ENCODE measurements at regions of chr1 and their contacts with region 1.

Region 1: DNA sequence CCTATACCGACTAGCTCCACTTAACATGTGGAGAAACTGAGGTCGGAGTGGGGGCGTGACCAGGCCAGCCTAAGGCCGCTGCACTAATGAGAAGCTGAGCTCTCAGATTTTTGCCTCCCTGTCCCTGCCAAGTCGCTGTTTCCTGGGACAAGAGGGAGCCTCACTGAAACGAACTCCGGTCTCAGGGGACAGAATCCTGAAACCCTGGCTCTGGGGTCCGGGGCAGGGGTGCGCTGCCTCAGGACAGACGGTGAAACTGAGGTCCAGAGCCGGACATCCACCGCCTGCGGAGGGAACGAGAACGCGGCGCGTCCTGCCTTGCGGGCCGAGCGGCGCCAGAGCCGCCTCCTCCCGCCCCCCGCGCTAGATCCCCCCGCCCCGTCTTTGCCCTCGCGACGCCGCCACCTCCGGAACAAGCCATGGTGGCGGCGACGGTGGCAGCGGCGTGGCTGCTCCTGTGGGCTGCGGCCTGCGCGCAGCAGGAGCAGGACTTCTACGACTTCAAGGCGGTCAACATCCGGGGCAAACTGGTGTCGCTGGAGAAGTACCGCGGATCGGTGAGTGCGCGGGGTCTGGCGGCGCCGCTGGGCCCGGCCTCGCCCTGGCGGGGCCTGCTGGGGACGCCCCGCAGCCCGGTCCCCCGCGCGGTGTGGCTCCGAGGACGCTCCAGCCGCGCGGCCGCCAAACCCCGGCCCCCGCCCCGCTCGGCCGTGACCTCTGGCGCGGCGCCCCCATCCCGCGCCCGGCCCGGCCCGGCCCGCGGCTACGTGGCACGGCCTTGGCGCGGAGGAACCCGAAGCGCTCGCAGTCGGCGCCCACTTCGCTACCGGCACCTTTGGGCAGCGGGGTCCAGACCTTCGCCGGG is at the start of gene GPX7:
- DNase-seq: peak; percentile 42 to 86 (median 64)
- ATAC-seq: peak; percentile 84
- H3K4me3 ChIP-seq: peak within 1 kb of the TSS; percentile 74
- H3K4me3 Mint-ChIP-seq: peak within 1 kb of the TSS; percentile 92
- H3K27ac ChIP-seq: peak within 1 kb of the TSS; percentile 62 to 73
- H3K27ac Mint-ChIP-seq: peak within 1 kb of the TSS; percentile 96
- H3K4me1 ChIP-seq: peaks cover 51% of the 10 kb centered on the region
- H3K4me1 Mint-ChIP-seq: peaks cover 50% of the 10 kb centered on the region
- H3K27me3 ChIP-seq: no peaks in the 10 kb centered on the region
- H3K27me3 Mint-ChIP-seq: no peaks in the 10 kb centered on the region
- CTCF ChIP-seq: no peak
- total RNA-seq, gene GPX7: 11.7 to 12.5 TPM

Region 2: DNA sequence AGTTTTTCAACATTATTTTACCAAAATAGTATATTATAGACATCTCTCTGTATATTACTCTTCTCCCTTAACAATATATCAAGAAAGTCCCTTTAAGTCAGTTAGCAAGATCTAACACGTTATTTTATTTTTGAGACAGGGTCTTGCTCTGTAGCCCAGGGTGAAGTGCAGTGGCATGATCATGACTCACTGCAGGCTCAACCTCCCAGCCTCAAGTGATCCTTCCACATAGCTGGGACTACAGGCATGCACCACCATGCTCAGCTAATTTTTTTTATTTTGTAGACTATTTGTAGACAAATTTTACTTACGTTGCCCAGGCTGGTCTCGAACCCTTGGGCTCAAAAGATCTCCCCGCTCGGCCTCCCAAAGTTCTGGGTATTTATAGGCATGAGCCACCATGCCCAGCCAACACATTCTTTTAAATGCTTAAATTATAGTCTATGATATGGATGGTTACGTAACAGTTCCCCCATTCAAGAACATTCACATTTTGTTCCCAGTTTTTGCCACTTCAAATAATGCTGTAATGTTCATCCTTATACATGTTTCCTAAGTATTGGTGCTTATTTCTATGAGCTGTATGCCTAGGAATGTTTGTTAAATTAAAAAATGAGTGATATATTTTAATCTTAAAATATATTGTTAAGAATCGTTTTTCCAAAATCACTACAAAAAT is 119.8 kb before region 1 on chr1:
- CTCF ChIA-PET with region 1: no interaction called
- POLR2A ChIA-PET with region 1: no interaction called
- intact Hi-C with region 1: no loop called
- DNase-seq: no peak
- ATAC-seq: no peak
- H3K4me3 ChIP-seq: no peak overlapping the region
- H3K4me3 Mint-ChIP-seq: no peak overlapping the region
- H3K27ac ChIP-seq: no peak overlapping the region
- H3K27ac Mint-ChIP-seq: no peak overlapping the region
- H3K4me1 ChIP-seq: no peaks in the 10 kb centered on the region
- H3K4me1 Mint-ChIP-seq: no peaks in the 10 kb centered on the region
- H3K27me3 ChIP-seq: no peaks in the 10 kb centered on the region
- H3K27me3 Mint-ChIP-seq: no peaks in the 10 kb centered on the region
- CTCF ChIP-seq: no peak

Region 3: DNA sequence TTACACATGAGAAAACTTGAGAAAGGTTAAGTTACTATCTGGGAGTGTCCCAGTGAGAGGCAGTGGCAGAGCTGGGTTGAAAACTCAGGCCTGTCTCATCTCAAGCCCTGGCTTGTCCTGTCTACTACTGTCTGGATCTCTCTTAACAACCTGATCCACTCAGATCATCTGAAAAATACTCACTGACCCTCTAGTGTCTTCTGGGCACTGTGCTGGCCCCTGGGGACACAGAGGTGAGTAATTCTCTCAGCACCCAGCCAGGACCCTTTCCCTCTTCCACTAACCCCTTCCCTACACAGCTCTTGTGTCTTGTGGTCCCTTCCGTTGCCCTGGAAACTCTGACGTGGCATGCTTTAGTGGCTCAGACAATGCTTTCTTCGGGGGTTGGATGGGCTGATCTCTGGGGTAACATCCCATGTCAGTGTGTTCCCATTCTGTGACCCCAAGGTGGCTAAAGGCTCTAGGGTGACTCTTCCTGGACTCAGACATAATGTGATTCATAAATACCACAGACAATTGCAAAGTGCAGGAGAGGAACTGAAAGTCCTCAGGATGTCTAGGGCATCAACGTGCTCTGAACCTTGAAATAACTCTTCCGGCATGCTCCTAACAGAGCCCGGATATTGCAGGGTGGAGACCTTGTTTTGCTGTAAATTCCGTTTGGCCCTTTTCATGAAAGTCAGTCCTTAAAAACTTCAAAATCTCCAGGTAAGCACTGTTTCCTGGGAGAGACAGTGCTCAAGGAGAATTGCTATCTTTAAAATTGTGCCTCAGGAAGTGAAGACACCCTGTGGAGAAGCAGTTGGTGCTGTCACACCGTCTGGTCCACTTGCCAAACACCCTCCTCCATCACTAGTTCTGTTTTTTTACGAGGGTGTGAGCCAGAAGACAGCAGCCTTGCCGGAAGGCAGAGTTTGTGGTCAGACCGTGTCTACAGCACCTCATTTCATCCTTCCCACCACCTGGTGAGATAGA is 34.8 kb after region 1 on chr1:
- CTCF ChIA-PET with region 1: no interaction called
- POLR2A ChIA-PET with region 1: interaction called, 34 read pairs
- intact Hi-C with region 1: loop called (anchors 1 to 2 kb)
- DNase-seq: peak; percentile 58 to 91 (median 66)
- ATAC-seq: peak; percentile 66
- H3K4me3 ChIP-seq: peak overlapping the region; percentile 41
- H3K4me3 Mint-ChIP-seq: peak overlapping the region; percentile 86
- H3K27ac ChIP-seq: peak overlapping the region; percentile 93 to 94
- H3K27ac Mint-ChIP-seq: peak overlapping the region; percentile 98
- H3K4me1 ChIP-seq: peaks cover 92% of the 10 kb centered on the region
- H3K4me1 Mint-ChIP-seq: peaks cover 84% of the 10 kb centered on the region
- H3K27me3 ChIP-seq: no peaks in the 10 kb centered on the region
- H3K27me3 Mint-ChIP-seq: no peaks in the 10 kb centered on the region
- CTCF ChIP-seq: no peak

Region 4: GRCh38 chr1:52662645-52663313 is 60.6 kb after region 1 on chr1:
- CTCF ChIA-PET with region 1: no interaction called
- POLR2A ChIA-PET with region 1: no interaction called
- intact Hi-C with region 1: loop called in 1 of 2 experiments (anchors 10 kb)
- DNase-seq: no peak
- ATAC-seq: no peak
- H3K4me3 ChIP-seq: no peak overlapping the region
- H3K4me3 Mint-ChIP-seq: no peak overlapping the region
- H3K27ac ChIP-seq: no peak overlapping the region
- H3K27ac Mint-ChIP-seq: peak overlapping the region; percentile 48
- H3K4me1 ChIP-seq: peaks cover 4% of the 10 kb centered on the region
- H3K4me1 Mint-ChIP-seq: peaks cover 4% of the 10 kb centered on the region
- H3K27me3 ChIP-seq: no peaks in the 10 kb centered on the region
- H3K27me3 Mint-ChIP-seq: no peaks in the 10 kb centered on the region
- CTCF ChIP-seq: no peak

Region 5: DNA sequence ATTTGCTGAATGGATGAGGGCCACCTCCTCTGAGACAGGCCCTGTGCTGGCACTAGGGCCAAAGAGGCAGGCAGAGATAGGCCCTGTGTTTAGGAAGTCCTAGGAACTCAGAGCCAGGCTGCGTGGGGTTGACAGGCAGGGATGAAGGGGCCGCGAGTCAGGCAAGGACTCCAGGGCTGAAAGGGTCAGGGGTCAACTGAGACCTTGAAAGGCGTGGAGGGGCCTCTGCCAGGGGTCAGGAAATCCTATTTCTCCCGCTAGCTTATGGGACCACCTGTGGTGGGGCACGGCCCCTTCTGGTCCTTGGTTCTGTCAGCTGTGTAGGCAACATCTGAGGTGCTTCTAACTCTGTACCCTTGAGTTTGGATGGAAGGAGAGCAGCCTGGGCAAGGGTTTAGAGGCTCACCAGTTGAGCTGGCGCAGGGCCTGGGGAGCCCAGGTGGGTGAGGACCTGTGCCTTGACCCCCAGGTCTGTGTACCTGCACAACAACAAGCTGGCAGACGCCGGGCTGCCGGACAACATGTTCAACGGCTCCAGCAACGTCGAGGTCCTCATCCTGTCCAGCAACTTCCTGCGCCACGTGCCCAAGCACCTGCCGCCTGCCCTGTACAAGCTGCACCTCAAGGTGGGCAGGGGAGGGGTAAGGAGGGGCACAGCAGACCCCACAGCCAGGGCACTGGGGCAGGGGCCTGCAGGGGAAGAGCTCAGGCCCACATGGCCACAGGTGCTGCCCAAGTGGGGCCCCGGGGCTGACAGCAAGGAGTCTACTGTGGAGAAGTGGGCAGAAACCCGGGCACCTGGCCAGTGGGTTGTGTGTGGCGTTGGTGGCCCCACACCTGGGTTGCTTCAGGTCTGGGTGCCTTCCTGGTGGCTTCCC is 474.7 kb after region 1 on chr1:
- CTCF ChIA-PET with region 1: no interaction called
- POLR2A ChIA-PET with region 1: no interaction called
- intact Hi-C with region 1: no loop called
- DNase-seq: no peak
- ATAC-seq: no peak
- H3K4me3 ChIP-seq: no peak overlapping the region
- H3K4me3 Mint-ChIP-seq: no peak overlapping the region
- H3K27ac ChIP-seq: no peak overlapping the region
- H3K27ac Mint-ChIP-seq: no peak overlapping the region
- H3K4me1 ChIP-seq: no peaks in the 10 kb centered on the region
- H3K4me1 Mint-ChIP-seq: no peaks in the 10 kb centered on the region
- H3K27me3 ChIP-seq: no peaks in the 10 kb centered on the region
- H3K27me3 Mint-ChIP-seq: no peaks in the 10 kb centered on the region
- CTCF ChIP-seq: no peak

Measured in CD4-positive, alpha-beta T cell (primary cell).